ENCODE measurements at regions of chr12 and their contacts with region 1.

Region 1: DNA sequence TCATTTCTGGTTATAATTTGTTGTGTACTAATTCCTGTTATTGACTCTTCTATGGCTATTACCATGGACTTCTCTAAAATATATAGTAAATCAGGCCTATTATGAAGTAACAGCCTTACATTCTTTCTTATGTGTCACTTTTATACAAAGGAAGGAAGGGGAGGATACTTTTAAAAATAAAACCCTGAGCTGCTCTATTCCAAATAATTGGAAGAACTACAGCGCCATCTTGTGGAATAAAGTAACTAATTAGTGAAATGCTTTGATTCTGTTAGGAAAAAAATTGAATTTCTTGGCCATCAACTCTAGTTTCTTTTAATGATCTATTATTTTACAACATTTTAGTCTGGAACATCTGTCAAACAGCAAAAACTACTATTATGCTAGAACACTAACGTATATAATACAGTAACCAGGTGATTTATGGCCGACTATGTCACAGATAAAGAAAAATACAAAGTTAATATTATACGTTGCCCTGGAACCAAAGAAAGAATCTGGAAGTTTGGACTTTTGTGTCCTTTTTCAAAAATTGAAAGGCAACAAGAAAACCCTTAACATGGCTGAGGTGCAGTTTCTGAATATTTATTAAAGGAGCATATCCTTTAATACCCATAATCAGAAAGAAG is 55.0 kb upstream of the NELL2 start:
- DNase-seq: peak in 1 of 2 experiments; percentile 56
- H3K4me3 ChIP-seq: no peak overlapping the region
- H3K27ac ChIP-seq: no peak overlapping the region
- H3K4me1 ChIP-seq: no peaks in the 10 kb centered on the region
- H3K27me3 ChIP-seq: no peaks in the 10 kb centered on the region
- CTCF ChIP-seq: peak; percentile 83

Region 2: GRCh38 chr12:43957732-43958372 is 973.2 kb before region 1 on chr12:
- CTCF ChIA-PET with region 1: no interaction called
- POLR2A ChIA-PET with region 1: no interaction called
- intact Hi-C with region 1: loop called (anchors 1 kb)
- DNase-seq: peak in 1 of 2 experiments; percentile 10
- H3K4me3 ChIP-seq: no peak overlapping the region
- H3K27ac ChIP-seq: no peak overlapping the region
- H3K4me1 ChIP-seq: no peaks in the 10 kb centered on the region
- H3K27me3 ChIP-seq: no peaks in the 10 kb centered on the region
- CTCF ChIP-seq: peak; percentile 70

Region 3: DNA sequence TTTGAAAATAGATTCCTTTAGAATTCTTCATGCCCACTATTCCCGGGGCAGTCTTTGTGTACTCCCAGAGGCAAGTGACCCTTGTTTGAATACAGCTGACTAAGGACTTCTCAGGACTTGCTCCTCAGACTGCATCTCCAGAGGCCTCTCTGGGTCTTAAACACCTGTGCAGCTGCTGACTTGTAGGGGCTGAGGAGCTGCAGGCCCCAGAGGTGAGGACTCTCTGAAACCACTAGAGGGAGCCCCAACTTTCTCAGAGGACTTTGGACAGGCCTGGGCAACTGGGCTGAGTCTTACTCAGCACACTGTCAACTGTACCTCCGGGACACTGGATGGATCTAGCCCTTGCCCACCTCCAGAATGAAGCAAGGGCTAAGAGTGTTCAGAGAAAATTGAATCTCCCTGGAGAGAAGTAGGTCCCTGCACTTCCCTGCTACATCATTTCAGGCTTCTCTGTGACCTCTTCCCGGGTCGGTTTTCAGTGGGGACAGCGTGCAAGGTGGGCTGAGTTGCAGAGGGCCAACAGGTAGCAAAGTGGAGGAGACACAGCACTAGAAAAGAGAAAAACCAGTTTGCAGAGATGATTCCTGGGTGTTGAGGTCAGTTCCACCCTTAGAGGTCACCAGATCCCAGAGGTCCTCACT is 930.7 kb before region 1 on chr12:
- CTCF ChIA-PET with region 1: interaction called, 5 read pairs
- POLR2A ChIA-PET with region 1: no interaction called
- intact Hi-C with region 1: loop called (anchors 5 kb)
- DNase-seq: peak in 1 of 2 experiments; percentile 27
- H3K4me3 ChIP-seq: no peak overlapping the region
- H3K27ac ChIP-seq: no peak overlapping the region
- H3K4me1 ChIP-seq: no peaks in the 10 kb centered on the region
- H3K27me3 ChIP-seq: no peaks in the 10 kb centered on the region
- CTCF ChIP-seq: peak; percentile 80

Region 4: DNA sequence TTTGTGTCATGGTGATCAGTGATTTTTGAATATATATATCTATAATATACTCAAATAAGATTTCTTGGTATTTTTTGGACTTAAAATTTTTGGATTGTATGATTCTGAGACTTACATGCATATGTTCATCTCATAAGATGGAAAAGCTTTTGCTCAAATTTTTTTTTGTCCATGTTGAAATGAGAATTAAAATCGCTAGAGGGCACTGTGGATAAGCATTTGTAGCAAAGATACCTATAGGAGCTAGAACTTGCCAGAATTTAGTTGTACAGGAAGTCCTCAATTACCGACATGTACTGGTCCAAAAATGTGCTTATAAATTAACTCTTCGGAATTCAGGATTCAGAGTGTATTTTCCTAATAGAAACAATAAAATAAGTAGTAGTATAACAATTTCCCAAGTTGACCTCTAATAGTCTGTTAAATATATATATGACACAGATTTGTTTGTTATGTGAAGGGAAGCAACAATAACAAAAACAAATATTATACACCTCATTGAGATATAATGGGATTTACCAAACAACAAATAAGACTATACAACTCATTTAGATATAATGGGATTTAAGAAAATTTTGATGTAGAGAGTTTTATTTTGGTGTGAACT is 915.6 kb before region 1 on chr12:
- CTCF ChIA-PET with region 1: no interaction called
- POLR2A ChIA-PET with region 1: no interaction called
- intact Hi-C with region 1: loop called (anchors 1 kb)
- DNase-seq: no peak
- H3K4me3 ChIP-seq: no peak overlapping the region
- H3K27ac ChIP-seq: no peak overlapping the region
- H3K4me1 ChIP-seq: no peaks in the 10 kb centered on the region
- H3K27me3 ChIP-seq: no peaks in the 10 kb centered on the region
- CTCF ChIP-seq: peak; percentile 78